ENCODE measurements at regions of chr18 and their contacts with region 1.

Region 1: GRCh38 chr18:23503038-23503962 is at the start of gene RMC1:
- DNase-seq: peak; percentile 92
- H3K4me3 ChIP-seq: peak within 1 kb of the TSS; percentile 54 to 86 (median 75)
- H3K27ac ChIP-seq: peak within 1 kb of the TSS; percentile 60
- H3K4me1 ChIP-seq: peaks cover 18% of the 10 kb centered on the region
- H3K27me3 ChIP-seq: no peaks in the 10 kb centered on the region
- CTCF ChIP-seq: peak in 1 of 2 donors; percentile 5
- POLR2A ChIP-seq: peak; percentile 88
- total RNA-seq, gene RMC1: 27.8 and 29.7 TPM in 2 replicates

Region 2: DNA sequence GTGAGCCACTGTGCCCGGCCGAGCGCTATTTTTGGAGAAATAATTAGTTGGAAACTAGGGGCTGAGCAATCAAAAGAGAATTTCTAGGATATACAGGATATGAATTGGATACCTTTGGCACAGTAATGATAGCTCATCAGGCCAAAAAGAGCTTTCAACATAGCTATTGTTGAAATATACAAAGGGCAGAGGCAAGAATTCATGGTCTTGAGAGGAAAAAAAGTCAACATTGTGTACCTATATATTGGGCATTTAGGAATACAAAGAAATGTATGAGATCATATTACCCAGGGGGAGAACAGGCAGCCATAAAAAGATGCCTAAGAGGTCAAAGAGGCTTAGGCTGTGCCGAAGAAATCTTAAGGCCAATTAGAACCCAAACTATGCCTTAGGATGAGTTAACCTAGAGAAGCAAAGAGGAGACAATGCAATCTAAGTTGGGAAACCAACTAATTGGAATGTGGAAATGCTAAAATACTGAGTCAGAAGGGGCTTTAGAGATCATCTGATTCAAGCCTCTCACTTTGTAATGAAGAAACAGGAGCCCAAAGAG is 471.2 kb before region 1 on chr18:
- CTCF ChIA-PET with region 1: interaction called, 12 read pairs
- POLR2A ChIA-PET with region 1: no interaction called
- dilution Hi-C with region 1: no loop called
- intact Hi-C with region 1: loop called (anchors 5 kb)
- DNase-seq: peak; percentile 45
- H3K4me3 ChIP-seq: no peak overlapping the region
- H3K27ac ChIP-seq: peak overlapping the region; percentile 20
- H3K4me1 ChIP-seq: peaks cover 10% of the 10 kb centered on the region
- H3K27me3 ChIP-seq: no peaks in the 10 kb centered on the region
- CTCF ChIP-seq: no peak
- POLR2A ChIP-seq: no peak

Region 3: DNA sequence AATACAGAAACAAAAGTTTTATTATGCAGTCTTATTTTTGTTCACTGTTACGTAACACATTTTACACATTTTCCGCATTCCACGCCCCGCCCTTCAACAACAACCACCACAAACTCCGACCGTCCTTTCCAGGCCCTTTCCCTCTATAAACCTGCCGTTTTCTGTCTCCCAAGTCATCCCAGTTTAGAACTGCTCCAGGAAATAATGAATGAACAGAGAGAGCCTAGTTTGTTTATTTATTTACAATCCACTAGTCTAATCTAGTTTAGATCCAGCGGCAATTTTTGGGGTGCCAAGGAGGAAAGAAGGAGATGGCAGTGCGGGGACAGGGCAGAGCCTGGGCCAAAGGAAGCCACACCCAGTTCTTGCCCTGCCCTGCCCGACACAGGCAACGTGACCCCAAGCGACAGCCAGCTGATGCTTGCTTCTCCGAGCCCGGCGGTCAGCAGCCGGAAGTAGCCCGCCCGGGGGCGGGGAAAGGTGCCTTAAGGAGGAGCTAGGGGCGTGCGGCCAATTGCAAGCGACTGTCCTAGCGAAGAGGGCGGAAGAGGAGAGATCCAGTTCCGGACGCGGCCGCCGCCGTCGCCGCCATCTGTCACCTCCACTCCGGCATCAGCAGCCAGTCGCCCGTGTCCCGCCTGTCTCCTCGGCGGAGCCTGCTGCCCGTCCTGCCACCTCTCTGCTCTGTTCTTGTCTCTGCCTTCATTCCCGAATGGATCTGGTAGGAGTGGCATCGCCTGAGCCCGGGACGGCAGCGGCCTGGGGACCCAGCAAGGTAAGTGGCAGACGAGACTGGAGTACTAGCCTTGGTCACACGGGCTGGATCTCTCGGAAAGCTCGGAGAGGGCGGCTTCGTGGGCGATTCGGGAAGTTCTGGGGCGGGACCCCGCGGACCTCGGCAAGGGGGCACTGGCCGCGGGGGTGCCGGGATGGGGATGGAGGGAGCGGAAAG is 50.3 kb before region 1 on chr18 and contains the start of gene RIOK3:
- CTCF ChIA-PET with region 1: interaction called, 11 read pairs
- POLR2A ChIA-PET with region 1: no interaction called
- dilution Hi-C with region 1: no loop called
- intact Hi-C with region 1: no loop called
- DNase-seq: peak; percentile 94
- H3K4me3 ChIP-seq: peak within 1 kb of the TSS; percentile 61 to 80 (median 79)
- H3K27ac ChIP-seq: peak within 1 kb of the TSS; percentile 81
- H3K4me1 ChIP-seq: peaks cover 14% of the 10 kb centered on the region
- H3K27me3 ChIP-seq: no peaks in the 10 kb centered on the region
- CTCF ChIP-seq: no peak
- POLR2A ChIP-seq: peak; percentile 62
- total RNA-seq, gene RIOK3: 50.7 and 55.7 TPM in 2 replicates

Region 4: GRCh38 chr18:23487738-23488570 is 15.3 kb before region 1 on chr18:
- CTCF ChIA-PET with region 1: interaction called, 71 read pairs
- POLR2A ChIA-PET with region 1: no interaction called
- dilution Hi-C with region 1: no loop called
- intact Hi-C with region 1: no loop called
- DNase-seq: peak; percentile 91
- H3K4me3 ChIP-seq: peak overlapping the region; percentile 3 to 27 (median 14)
- H3K27ac ChIP-seq: peak overlapping the region; percentile 68
- H3K4me1 ChIP-seq: peaks cover 30% of the 10 kb centered on the region
- H3K27me3 ChIP-seq: no peaks in the 10 kb centered on the region
- CTCF ChIP-seq: no peak
- POLR2A ChIP-seq: no peak

Region 5: DNA sequence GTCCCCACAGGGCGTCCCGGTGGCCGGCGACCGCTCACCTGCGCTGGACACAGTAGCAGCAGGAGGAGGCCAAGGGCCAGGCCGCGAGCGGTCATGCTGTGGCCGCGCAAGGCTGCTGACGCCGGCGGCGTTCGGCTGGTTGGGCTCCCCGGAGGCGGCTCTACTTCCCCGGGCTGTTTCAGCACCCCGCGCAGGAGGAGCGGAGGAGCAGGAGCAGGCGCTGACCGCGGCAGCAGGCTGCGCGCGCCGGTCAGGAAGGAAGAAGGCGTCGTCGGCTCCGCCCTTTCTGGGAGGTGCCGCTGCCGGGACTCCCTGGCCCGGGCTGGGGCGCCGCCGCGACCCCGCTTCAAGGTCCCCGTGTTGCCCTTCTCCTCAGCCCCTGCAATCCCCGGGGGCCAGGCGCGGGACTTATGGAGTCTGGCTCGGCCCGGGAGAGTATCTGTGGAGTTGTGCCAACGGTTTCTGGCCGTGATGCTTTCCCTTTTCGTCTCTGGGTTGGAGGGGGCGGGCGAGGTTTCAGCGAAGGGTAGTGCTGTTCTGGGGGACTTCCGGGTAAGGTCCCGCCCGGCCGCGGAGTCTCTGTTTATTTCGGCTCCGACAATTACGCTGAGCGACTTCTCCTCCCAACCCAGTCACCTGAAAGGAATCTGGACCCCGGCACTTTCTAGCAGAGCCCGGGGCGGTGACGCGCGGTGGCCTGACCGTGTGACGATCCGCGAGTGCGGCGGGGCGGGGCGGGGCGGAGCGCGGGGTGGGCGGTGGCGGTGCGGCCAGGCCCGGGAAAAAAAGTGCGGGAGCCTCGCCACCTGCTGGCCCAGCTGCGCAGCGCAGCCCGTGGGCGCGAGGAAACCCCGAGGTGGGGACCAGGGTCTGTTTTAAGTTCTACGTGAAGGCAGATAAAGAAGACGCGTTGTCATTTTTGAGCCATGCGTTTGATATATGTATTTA is 83.2 kb after region 1 on chr18 and contains the start of gene NPC1:
- CTCF ChIA-PET with region 1: interaction called, 4 read pairs
- POLR2A ChIA-PET with region 1: no interaction called
- dilution Hi-C with region 1: no loop called
- intact Hi-C with region 1: loop called (anchors 1 kb)
- DNase-seq: peak; percentile 91
- H3K4me3 ChIP-seq: peak within 1 kb of the TSS; percentile 44 to 76 (median 71)
- H3K27ac ChIP-seq: peak within 1 kb of the TSS; percentile 99
- H3K4me1 ChIP-seq: peaks cover 18% of the 10 kb centered on the region
- H3K27me3 ChIP-seq: no peaks in the 10 kb centered on the region
- CTCF ChIP-seq: peak; percentile 69 to 87
- POLR2A ChIP-seq: peak; percentile 85
- total RNA-seq, gene NPC1: 45.2 and 58.2 TPM in 2 replicates

Region 6: DNA sequence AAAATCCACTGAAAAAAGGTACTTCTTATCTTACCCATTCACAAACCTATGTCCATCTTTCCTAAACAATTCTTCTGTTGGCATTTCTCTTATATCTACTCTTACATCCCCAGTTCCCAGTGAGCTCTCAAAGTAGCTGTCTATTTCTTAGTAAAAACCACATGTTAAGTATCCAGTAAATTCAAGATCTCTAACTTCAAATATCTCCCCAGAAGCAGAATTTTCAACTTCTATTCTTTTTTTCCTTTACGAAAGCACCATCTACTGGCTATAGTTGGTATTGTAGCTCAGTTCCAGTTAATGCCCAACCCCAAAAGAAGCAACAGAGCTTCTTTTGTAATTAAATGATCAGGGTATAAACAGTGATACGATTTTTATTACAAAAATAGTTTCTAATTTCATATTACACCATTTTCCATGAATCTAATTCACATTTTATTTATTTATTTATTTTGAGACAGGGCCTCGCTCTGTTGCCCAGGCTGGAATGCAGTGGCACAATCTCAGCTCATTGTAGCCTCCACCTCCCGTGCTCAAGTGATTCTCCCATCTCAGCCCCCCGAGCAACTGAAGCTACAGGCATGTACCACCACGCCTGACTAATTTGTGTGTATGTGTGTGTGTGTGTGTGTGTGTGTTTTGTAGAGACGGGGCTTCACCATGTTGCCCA is 985.7 kb after region 1 on chr18:
- CTCF ChIA-PET with region 1: no interaction called
- POLR2A ChIA-PET with region 1: no interaction called
- dilution Hi-C with region 1: no loop called
- intact Hi-C with region 1: no loop called
- DNase-seq: peak; percentile 54
- H3K4me3 ChIP-seq: no peak overlapping the region
- H3K27ac ChIP-seq: no peak overlapping the region
- H3K4me1 ChIP-seq: no peaks in the 10 kb centered on the region
- H3K27me3 ChIP-seq: peaks cover 14 to 16% of the 10 kb centered on the region in 2 experiments
- CTCF ChIP-seq: peak; percentile 42 to 56
- POLR2A ChIP-seq: no peak